ENCODE measurements at regions of chr12 and their contacts with region 1.

Region 1: DNA sequence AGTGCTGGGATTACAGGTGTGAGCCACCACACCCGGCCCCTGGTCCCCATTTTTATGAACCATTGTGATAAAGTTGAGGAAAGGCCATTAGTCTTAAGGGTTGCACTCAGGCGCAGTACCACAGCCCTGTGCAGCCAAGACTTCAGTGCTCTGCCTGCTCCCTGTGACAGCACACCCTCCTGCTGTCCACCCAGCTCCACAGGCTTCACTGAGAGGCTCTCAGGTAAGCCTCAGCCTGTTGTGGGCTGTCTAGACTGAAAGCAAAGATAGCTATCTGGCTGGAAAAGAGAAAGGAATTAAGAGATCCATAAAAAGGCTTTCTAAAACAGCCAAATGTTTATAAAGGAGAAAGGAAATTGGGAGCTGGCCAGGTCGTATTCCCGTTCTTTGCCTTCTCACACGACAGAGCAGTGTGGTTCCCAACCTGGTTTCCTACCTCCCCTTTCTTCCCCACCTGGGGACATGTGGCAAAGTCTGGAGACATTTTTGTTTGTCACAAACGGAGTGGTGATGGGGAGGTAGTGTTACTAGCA is 19.1 kb upstream of the DNM1L start:
- DNase-seq: peak in 1 of 3 donors; percentile 26
- ATAC-seq: peak; percentile 41
- H3K4me3 ChIP-seq: no peak overlapping the region
- H3K4me1 ChIP-seq: peaks cover 7% of the 10 kb centered on the region
- CTCF ChIP-seq: no peak

Region 2: DNA sequence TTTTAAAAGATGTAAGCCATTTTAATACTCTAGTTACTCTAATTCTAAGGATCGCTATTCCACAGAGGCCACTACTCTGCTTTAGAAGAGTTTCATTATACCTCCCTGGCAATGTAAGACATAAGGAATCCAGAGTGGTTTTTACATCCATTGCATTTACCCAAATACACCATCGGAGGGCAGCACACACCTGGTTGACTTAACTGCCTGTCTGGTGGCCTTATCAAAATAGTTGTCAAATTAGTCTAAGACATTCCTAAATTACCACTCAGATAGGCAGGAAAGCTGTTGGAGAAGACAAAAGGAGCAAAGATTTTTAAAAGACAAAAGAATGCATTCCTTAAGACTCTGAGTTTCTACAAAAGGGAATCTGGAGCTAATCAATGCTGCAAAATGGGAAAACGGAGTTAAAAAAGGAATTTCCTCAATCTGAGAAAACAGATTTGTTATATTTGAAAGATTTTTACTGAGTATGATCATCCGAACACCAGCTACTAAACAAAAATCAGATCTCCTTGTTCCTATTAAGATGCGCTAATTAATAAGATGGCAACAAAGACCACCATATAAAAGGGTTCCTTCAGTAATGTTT is 294.4 kb before region 1 on chr12:
- intact Hi-C with region 1: loop called in 1 of 2 experiments (anchors 10 kb)
- DNase-seq: peak in 1 of 3 donors; percentile 67
- ATAC-seq: peak; percentile 93
- H3K4me3 ChIP-seq: no peak overlapping the region
- H3K4me1 ChIP-seq: peaks cover 5% of the 10 kb centered on the region
- CTCF ChIP-seq: peak; percentile 37

Region 3: DNA sequence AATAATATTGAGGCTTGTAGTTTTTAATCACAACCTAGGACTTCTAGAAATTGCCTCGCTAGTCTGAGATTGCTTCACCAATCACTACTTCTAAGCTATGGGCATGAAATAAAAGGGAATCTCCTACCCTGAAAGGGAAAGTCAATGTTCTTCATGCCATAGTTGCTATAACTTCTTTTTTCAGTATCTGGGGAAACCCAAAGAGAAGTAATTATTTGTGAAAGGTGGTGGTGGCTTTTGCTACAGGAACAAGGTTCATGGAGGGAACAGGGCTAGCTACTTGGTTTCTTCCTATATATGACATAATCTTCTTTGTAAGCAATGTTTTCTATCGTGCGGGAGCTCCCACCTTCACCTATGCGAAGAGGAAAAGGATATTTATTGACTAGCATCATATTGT is 42.4 kb before region 1 on chr12:
- intact Hi-C with region 1: no loop called
- DNase-seq: no peak
- ATAC-seq: no peak
- H3K4me3 ChIP-seq: no peak overlapping the region
- H3K4me1 ChIP-seq: no peaks in the 10 kb centered on the region
- CTCF ChIP-seq: no peak

Measured in mucosa of descending colon (tissue), 3 donors.